CD4-positive, alpha-beta T cell (primary cell): ENCODE measurements at regions of chr5 and their contacts with region 1.

Region 1: DNA sequence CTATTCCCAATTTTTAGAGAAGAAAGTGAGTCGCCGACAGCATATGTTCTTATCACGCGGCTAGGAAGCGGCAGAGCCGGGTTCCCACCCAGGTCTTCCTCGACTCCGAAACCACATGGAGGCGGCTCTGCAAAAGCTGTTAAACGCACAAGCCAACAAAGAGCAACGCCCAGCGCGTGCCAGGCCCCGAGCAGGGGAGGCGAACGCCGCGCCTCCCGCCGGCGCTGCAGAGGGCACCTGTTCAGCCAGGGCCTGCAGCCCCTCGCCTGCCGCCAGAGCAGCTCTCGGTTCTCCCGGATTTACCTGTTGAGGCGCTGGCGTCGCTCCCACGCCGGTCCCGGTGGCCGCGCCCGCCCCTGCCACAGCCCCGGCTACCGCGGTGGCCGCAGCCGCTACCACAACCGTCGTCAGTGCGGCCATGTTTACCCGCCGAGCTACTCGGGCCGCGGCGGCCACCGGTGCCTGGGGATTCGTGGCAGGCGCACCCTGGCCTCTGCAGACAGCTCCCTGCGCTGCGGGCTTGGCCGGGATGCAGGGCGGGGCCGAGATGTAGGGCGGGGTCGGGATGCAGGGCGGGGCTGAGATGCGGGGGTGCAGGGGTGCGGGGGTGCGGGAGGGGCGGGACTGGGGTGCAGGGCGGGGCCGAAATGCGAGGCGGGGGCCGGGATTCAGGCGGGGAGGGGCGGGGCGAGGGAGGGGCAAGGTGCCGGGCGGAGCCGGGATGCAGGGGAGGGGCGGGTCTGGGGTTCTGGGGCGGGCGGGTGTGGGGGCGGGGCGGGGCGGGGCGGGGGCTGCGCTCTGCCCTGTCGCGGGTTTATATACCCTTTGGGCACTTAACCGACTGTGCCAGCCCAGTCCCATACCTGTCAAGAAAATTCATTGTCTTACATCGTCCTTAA is at the start of gene CCDC112:
- DNase-seq: peak; percentile 57 to 92 (median 76)
- ATAC-seq: peak; percentile 77
- H3K4me3 ChIP-seq: peak within 1 kb of the TSS; percentile 55
- H3K4me3 Mint-ChIP-seq: peak within 1 kb of the TSS; percentile 87
- H3K27ac ChIP-seq: no peak within 1 kb of the TSS
- H3K27ac Mint-ChIP-seq: peak within 1 kb of the TSS; percentile 10
- H3K4me1 ChIP-seq: peaks cover 12% of the 10 kb centered on the region
- H3K4me1 Mint-ChIP-seq: peaks cover 11% of the 10 kb centered on the region
- H3K27me3 ChIP-seq: no peaks in the 10 kb centered on the region
- H3K27me3 Mint-ChIP-seq: no peaks in the 10 kb centered on the region
- CTCF ChIP-seq: no peak
- total RNA-seq, gene CCDC112: 3.1 to 3.9 TPM

Region 2: GRCh38 chr5:114391321-114391720 is 905.1 kb before region 1 on chr5:
- CTCF ChIA-PET with region 1: no interaction called
- POLR2A ChIA-PET with region 1: no interaction called
- intact Hi-C with region 1: no loop called
- DNase-seq: no peak
- ATAC-seq: no peak
- H3K4me3 ChIP-seq: no peak overlapping the region
- H3K4me3 Mint-ChIP-seq: no peak overlapping the region
- H3K27ac ChIP-seq: no peak overlapping the region
- H3K27ac Mint-ChIP-seq: no peak overlapping the region
- H3K4me1 ChIP-seq: no peaks in the 10 kb centered on the region
- H3K4me1 Mint-ChIP-seq: no peaks in the 10 kb centered on the region
- H3K27me3 ChIP-seq: no peaks in the 10 kb centered on the region
- H3K27me3 Mint-ChIP-seq: no peaks in the 10 kb centered on the region
- CTCF ChIP-seq: no peak

Region 3: GRCh38 chr5:115169487-115170133 is 126.8 kb before region 1 on chr5 and contains the start of gene TRIM36:
- CTCF ChIA-PET with region 1: no interaction called
- POLR2A ChIA-PET with region 1: interaction called, 3 read pairs
- intact Hi-C with region 1: loop called in 1 of 2 experiments (anchors 5 kb)
- DNase-seq: peak; percentile 66 to 92 (median 82)
- ATAC-seq: peak; percentile 90
- H3K4me3 ChIP-seq: peak within 1 kb of the TSS; percentile 69
- H3K4me3 Mint-ChIP-seq: peak within 1 kb of the TSS; percentile 85
- H3K27ac ChIP-seq: no peak within 1 kb of the TSS
- H3K27ac Mint-ChIP-seq: no peak within 1 kb of the TSS
- H3K4me1 ChIP-seq: peaks cover 22% of the 10 kb centered on the region
- H3K4me1 Mint-ChIP-seq: peaks cover 15% of the 10 kb centered on the region
- H3K27me3 ChIP-seq: peaks cover 57 to 84% of the 10 kb centered on the region in 2 experiments
- H3K27me3 Mint-ChIP-seq: peaks cover 83% of the 10 kb centered on the region
- CTCF ChIP-seq: no peak
- total RNA-seq, gene TRIM36: 0.14 TPM in 1 of 2 experiments, not detected in the other

Region 4: GRCh38 chr5:115231598-115231997 is 64.8 kb before region 1 on chr5:
- CTCF ChIA-PET with region 1: no interaction called
- POLR2A ChIA-PET with region 1: no interaction called
- intact Hi-C with region 1: no loop called
- DNase-seq: no peak
- ATAC-seq: no peak
- H3K4me3 ChIP-seq: no peak overlapping the region
- H3K4me3 Mint-ChIP-seq: no peak overlapping the region
- H3K27ac ChIP-seq: no peak overlapping the region
- H3K27ac Mint-ChIP-seq: no peak overlapping the region
- H3K4me1 ChIP-seq: no peaks in the 10 kb centered on the region
- H3K4me1 Mint-ChIP-seq: peaks cover 4% of the 10 kb centered on the region
- H3K27me3 ChIP-seq: no peaks in the 10 kb centered on the region
- H3K27me3 Mint-ChIP-seq: no peaks in the 10 kb centered on the region
- CTCF ChIP-seq: no peak

Region 5: GRCh38 chr5:115262321-115263077 is 33.9 kb before region 1 on chr5 and contains the start of gene PGGT1B:
- CTCF ChIA-PET with region 1: interaction called, 3 read pairs
- POLR2A ChIA-PET with region 1: interaction called, 31 read pairs
- intact Hi-C with region 1: loop called in 1 of 2 experiments (anchors 2 kb)
- DNase-seq: peak; percentile 48 to 82 (median 64)
- ATAC-seq: peak; percentile 93
- H3K4me3 ChIP-seq: peak within 1 kb of the TSS; percentile 76
- H3K4me3 Mint-ChIP-seq: peak within 1 kb of the TSS; percentile 96
- H3K27ac ChIP-seq: peak within 1 kb of the TSS; percentile 52 to 72
- H3K27ac Mint-ChIP-seq: peak within 1 kb of the TSS; percentile 77
- H3K4me1 ChIP-seq: peaks cover 14% of the 10 kb centered on the region
- H3K4me1 Mint-ChIP-seq: peaks cover 53% of the 10 kb centered on the region
- H3K27me3 ChIP-seq: no peaks in the 10 kb centered on the region
- H3K27me3 Mint-ChIP-seq: no peaks in the 10 kb centered on the region
- CTCF ChIP-seq: no peak
- total RNA-seq, gene PGGT1B: 37.5 to 39.3 TPM

Region 6: DNA sequence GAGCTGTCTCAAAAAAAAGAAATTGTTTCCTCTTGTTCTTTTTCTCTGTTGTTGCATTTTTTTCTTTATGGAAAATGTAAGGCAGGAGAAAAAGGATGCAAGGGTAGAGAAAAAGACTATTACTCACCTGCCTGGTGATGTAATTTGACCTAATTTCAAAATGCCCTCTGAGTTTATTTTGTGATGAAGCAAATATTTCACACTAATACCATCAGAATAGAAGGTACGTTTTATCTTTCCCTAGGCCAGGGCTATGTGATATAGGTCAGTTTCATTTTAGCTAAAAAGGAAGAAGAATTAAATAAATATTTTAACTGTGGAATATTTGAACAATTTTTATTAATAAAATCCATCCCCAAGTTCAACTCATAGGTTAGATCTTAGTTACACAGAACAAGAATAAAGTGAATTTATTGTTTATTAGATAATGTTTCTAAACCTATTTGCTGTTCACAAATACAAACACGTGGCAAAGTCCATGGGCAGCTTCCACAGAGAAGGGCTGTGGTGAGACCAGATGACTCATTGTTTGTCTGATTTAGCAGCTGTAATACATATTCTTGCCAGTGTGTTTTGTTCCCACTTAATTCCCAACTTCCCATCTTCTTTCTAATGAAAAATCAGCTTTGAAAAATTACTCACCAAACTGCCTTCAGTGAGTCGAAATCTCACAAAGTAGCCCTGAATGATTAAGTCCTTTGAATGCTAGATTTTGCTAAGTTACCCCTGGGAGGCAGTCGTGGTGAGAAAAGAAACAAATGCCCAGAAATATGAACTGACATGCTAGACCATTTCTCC is 52.8 kb after region 1 on chr5:
- CTCF ChIA-PET with region 1: no interaction called
- POLR2A ChIA-PET with region 1: no interaction called
- intact Hi-C with region 1: no loop called
- DNase-seq: no peak
- ATAC-seq: no peak
- H3K4me3 ChIP-seq: no peak overlapping the region
- H3K4me3 Mint-ChIP-seq: no peak overlapping the region
- H3K27ac ChIP-seq: no peak overlapping the region
- H3K27ac Mint-ChIP-seq: no peak overlapping the region
- H3K4me1 ChIP-seq: no peaks in the 10 kb centered on the region
- H3K4me1 Mint-ChIP-seq: no peaks in the 10 kb centered on the region
- H3K27me3 ChIP-seq: no peaks in the 10 kb centered on the region
- H3K27me3 Mint-ChIP-seq: peaks cover 54% of the 10 kb centered on the region
- CTCF ChIP-seq: no peak

Region 7: DNA sequence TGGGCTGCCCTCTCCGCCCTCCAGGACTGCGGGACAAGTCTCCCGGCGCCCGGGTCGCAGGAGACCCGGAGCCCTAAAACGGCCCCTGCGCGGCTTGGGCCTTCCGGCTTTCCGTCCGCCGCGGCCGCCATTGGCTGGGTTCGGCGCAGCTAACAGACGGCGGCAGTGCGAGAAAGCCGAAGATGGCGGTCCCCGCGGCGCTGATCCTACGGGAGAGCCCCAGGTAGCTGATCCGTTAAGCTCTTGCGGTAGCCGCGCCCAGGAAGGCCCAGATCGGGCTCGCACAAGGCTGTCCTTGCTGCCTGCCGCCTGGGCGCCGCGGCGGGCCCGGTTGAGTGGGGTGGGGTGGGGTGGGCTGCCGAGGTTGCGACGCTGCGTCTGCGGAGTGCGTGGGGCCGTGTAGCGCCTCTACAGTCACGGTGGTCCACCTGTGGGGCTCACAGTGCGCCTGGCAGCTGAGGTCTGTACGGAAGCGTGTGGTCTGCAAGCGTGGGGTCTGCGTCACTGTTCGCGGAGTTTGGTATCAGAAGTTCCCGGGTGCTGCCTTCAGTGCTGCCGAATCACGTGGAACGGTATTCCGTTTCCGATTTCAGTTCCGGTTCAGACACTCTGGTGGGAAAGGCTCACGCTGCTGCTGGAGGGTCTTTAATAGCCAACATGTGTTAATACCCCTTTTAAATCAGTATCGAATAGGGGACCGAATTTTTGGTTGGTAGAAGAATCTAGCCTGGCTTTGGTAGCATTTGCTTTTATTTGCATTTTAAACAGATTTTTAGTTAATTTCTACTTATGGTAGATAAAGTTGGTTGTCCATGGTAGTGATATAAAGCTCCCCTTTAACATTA is 788.7 kb after region 1 on chr5 and contains the start of gene COMMD10:
- CTCF ChIA-PET with region 1: no interaction called
- POLR2A ChIA-PET with region 1: interaction called, 5 read pairs
- intact Hi-C with region 1: loop called in 1 of 2 experiments (anchors 5 kb)
- DNase-seq: peak; percentile 58 to 93 (median 72)
- ATAC-seq: peak; percentile 90
- H3K4me3 ChIP-seq: peak within 1 kb of the TSS; percentile 86
- H3K4me3 Mint-ChIP-seq: peak within 1 kb of the TSS; percentile 99
- H3K27ac ChIP-seq: peak within 1 kb of the TSS; percentile 81 to 82
- H3K27ac Mint-ChIP-seq: peak within 1 kb of the TSS; percentile 99
- H3K4me1 ChIP-seq: peaks cover 16% of the 10 kb centered on the region
- H3K4me1 Mint-ChIP-seq: peaks cover 76% of the 10 kb centered on the region
- H3K27me3 ChIP-seq: no peaks in the 10 kb centered on the region
- H3K27me3 Mint-ChIP-seq: no peaks in the 10 kb centered on the region
- CTCF ChIP-seq: no peak
- total RNA-seq, gene COMMD10: 26.0 to 27.6 TPM